H1 (cell line): ENCODE measurements at regions of chr7 and their contacts with region 1.

Region 1: GRCh38 chr7:99918959-99919813 is at the start of gene TRIM4:
- DNase-seq: peak in 1 of 2 experiments; percentile 68
- H3K4me3 ChIP-seq: peak within 1 kb of the TSS in 1 of 4 experiments; percentile 26; a peak in 2 of 8 replicates
- H3K27ac ChIP-seq: no peak within 1 kb of the TSS
- H3K4me1 ChIP-seq: no peaks in the 10 kb centered on the region
- H3K27me3 ChIP-seq: no peaks in the 10 kb centered on the region
- CTCF ChIP-seq: no peak
- EP300 ChIP-seq: no peak
- POLR2A ChIP-seq: no peak
- RAD21 ChIP-seq: no peak
- total RNA-seq, gene TRIM4: 6.6 and 7.3 TPM in 2 replicates

Region 2: GRCh38 chr7:99943641-99944496 is 24.7 kb after region 1 on chr7:
- CTCF ChIA-PET with region 1: interaction called, 36 read pairs
- POLR2A ChIA-PET with region 1: interaction called, 28 read pairs
- DNase-seq: peak; percentile 62 to 74
- H3K4me3 ChIP-seq: peak overlapping the region in 3 of 4 experiments; percentile 1 to 48 (median 4); a peak in 3 of 8 replicates
- H3K27ac ChIP-seq: peak overlapping the region; percentile 95
- H3K4me1 ChIP-seq: peaks cover 8 to 13% (median 11%) of the 10 kb centered on the region in 4 experiments; a peak in 5 of 7 replicates
- H3K27me3 ChIP-seq: no peaks in the 10 kb centered on the region; a peak in 1 of 7 replicates
- CTCF ChIP-seq: no peak
- EP300 ChIP-seq: peak in 1 of 2 experiments; percentile 90; a peak in 1 of 3 replicates
- POLR2A ChIP-seq: peak; percentile 51 to 59; a peak in 2 of 3 replicates
- RAD21 ChIP-seq: no peak

Region 3: DNA sequence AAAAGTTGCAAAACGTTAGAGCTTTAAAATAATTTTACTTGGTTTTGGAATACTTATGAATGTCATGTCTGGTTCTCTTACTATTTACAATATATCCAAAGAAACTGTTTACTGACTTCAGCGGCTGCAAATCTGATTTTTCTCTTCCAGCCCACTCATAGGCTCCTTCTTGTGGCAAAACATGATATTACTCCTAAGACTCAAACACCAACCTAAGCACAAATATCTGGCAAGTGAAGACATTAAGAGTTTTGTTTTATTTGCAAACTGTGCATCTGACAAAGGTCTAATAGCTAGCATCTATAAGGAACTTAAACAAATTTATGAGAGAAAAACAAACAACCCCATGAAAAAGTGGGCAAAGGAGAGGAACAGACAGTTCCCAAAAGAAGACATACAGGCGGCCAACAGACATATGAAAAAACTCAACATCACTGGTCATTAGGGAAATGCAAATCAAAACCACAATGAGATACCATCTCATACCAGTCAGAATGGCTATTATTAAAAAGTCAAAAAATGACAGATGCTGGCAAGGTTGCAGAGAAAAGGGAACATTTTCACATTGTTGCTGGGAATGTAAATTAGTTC is 30.5 kb after region 1 on chr7:
- CTCF ChIA-PET with region 1: interaction called, 36 read pairs
- POLR2A ChIA-PET with region 1: interaction called, 28 read pairs
- DNase-seq: no peak
- H3K4me3 ChIP-seq: no peak overlapping the region
- H3K27ac ChIP-seq: no peak overlapping the region
- H3K4me1 ChIP-seq: peaks cover 4 to 6% (median 5%) of the 10 kb centered on the region in 4 experiments; a peak in 5 of 7 replicates
- H3K27me3 ChIP-seq: no peaks in the 10 kb centered on the region
- CTCF ChIP-seq: peak in 2 of 3 experiments; percentile 35 to 49; a peak in 2 of 4 replicates
- EP300 ChIP-seq: no peak
- POLR2A ChIP-seq: no peak
- RAD21 ChIP-seq: peak; percentile 48 to 58

Region 4: GRCh38 chr7:99975782-99976521 is 56.8 kb after region 1 on chr7 and contains the start of gene AZGP1:
- CTCF ChIA-PET with region 1: interaction called, 17 read pairs
- POLR2A ChIA-PET with region 1: no interaction called
- DNase-seq: no peak
- H3K4me3 ChIP-seq: no peak within 1 kb of the TSS
- H3K27ac ChIP-seq: no peak within 1 kb of the TSS
- H3K4me1 ChIP-seq: peaks cover 0 to 4% (median under 1%) of the 10 kb centered on the region in 4 experiments; a peak in 1 of 7 replicates
- H3K27me3 ChIP-seq: no peaks in the 10 kb centered on the region
- CTCF ChIP-seq: no peak
- EP300 ChIP-seq: no peak
- POLR2A ChIP-seq: no peak
- RAD21 ChIP-seq: no peak
- total RNA-seq, gene AZGP1: 0.29 and 0.52 TPM in 2 replicates

Region 5: DNA sequence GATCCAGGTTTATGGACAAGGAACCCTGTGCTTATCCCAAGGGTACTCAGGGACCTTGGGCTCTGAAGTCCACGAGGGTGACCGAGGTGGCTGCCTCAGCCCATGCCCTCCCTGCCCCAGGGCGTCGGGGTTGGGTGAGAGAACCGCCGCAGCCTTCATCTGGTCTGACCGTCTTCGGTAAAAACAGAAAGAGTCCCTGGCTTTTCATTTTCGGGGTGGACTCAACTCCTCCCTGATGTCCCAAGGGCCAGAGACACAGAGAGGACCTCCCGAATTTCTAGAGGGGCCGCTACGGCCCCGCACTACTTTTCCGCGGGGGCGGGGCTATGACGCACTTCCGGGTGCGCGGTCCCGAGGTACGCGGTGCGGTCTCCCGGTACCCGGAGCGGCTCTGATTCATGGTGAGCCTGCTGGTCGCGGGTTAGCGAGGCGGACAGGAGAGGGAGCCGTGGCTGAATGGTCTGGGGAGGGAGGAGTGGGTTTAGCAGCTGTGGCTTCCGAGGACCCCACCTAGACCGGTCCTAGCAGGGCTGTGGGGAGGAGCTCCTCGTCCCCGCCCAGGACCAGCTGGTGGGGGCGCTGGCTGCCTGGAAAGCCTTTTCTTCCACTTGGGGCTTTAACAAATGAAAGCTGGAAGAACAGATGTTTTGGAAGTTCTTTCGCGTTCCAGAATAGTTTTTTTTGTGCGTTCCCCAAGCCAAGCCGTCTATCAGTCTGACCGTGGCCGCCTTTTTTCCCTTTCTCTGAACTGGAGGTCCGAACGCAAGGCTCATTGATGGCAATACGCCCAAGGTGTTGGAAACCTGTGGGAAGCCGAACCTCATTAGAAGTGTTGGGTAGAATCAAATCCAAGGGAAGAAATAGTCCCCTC is 130.5 kb after region 1 on chr7 and contains the start of gene ZSCAN21:
- CTCF ChIA-PET with region 1: interaction called, 15 read pairs
- POLR2A ChIA-PET with region 1: no interaction called
- DNase-seq: peak; percentile 34 to 95
- H3K4me3 ChIP-seq: peak within 1 kb of the TSS; percentile 79 to 98 (median 86)
- H3K27ac ChIP-seq: peak within 1 kb of the TSS; percentile 86
- H3K4me1 ChIP-seq: peaks cover 0 to 3% (median 0%) of the 10 kb centered on the region in 4 experiments; a peak in 3 of 7 replicates
- H3K27me3 ChIP-seq: peaks cover 0 to 1% (median 0%) of the 10 kb centered on the region in 4 experiments; a peak in 1 of 7 replicates
- CTCF ChIP-seq: peak in 1 of 3 experiments; percentile 7; a peak in 1 of 4 replicates
- EP300 ChIP-seq: no peak
- POLR2A ChIP-seq: peak; percentile 84 to 94
- RAD21 ChIP-seq: no peak
- total RNA-seq, gene ZSCAN21: 25.4 and 26.1 TPM in 2 replicates